ENCODE measurements at regions of chr11 and their contacts with region 1.

Region 1: GRCh38 chr11:121741761-121742361 is 289.1 kb upstream of the SORL1-AS1 start:
- DNase-seq: peak; percentile 26 to 95
- H3K4me3 ChIP-seq: peak overlapping the region; percentile 7 to 21
- H3K27ac ChIP-seq: peak overlapping the region; percentile 83 to 90
- H3K4me1 ChIP-seq: peaks cover 9 to 19% of the 10 kb centered on the region in 2 donors
- H3K27me3 ChIP-seq: no peaks in the 10 kb centered on the region
- CTCF ChIP-seq: no peak

Region 2: DNA sequence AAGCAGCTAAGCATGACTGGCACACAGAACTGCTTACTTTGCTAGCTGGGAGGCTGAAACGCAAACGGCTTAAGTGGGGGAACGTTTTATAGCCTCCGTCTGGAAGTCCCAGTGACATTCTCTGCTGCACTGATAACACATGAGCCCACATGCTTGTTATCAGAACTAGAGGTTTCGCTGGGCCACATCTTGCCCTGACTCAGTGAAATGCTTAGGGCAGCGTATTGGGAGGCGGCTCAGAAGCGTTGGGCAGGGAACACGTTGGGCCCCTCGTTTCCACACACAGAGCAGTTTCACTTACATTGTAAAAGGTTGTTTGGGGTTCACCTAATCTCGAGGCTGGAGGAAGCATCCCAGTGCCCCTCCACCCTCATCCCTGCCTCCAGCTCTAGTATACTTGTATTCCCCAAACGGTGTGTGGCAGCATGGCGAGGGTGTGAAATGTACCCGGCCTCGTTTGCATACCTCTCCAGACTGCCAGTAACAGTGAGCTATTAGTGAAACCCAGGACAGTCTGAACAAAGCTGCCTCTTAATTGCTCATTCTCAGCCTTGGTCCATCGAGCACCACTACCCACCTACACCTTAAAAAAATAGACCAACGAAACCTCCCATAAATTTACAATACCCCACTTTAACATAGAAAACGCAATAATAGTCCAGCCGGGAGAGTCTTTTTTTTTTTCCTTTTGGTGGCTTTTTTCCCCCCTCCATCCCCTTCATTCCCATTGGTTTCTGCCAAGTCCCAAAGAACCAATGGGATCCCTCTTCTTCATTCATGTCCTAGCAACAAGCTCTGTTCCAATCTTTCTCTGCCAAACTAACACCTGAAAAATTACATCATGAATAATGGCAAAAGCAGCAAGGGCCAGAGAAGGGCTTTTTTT is 70.3 kb before region 1 on chr11:
- intact Hi-C with region 1: loop called (anchors 5 kb)
- DNase-seq: no peak
- H3K4me3 ChIP-seq: peak overlapping the region in 1 of 2 donors; percentile 34
- H3K27ac ChIP-seq: peak overlapping the region; percentile 74 to 84
- H3K4me1 ChIP-seq: peaks cover 17 to 22% of the 10 kb centered on the region in 2 donors
- H3K27me3 ChIP-seq: no peaks in the 10 kb centered on the region
- CTCF ChIP-seq: no peak

Region 3: DNA sequence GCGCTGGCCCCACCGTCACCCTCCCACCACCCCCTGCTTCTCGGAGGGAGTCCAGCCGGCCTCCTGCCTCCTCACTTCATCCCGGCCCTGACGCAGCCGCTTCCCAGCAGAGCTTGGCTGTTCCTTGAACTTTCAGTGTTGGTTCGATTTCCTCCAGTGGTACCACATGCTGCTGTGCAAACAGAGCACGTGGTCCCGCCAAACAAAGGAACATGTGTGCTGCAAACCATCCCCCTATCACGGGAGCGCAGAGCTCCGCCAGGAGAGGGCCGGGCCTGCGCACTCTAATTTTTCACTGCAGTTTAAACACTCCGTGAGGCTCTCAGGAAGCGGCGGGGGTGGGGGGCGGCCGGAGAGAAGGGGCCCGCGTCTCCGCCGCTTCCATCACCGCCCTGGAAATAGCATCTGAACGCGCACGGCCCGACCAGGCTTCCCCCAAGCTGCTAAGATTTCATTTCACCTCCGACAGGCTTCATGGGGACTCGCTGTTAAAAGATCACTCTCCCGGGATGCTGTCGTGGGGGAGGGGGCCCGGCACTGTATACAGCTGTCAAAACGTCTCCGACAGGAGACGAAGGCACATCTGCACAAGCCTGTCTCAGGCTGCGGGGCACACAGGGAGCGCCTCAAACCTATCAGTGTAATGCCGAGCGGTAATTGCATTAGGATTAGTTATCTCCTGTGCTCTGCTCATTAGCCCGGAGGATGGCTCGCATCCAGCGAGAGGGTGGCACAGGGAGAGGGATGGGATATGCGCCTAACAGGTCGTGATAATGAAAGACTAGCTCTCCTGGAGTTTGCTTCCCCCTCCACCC is 19.2 kb before region 1 on chr11:
- intact Hi-C with region 1: loop called (anchors 1 kb)
- DNase-seq: peak; percentile 77 to 89
- H3K4me3 ChIP-seq: peak overlapping the region; percentile 64 to 79
- H3K27ac ChIP-seq: peak overlapping the region; percentile 85 to 93
- H3K4me1 ChIP-seq: no peaks in the 10 kb centered on the region
- H3K27me3 ChIP-seq: no peaks in the 10 kb centered on the region
- CTCF ChIP-seq: peak in 2 of 3 experiments; percentile 9 to 14

Region 4: DNA sequence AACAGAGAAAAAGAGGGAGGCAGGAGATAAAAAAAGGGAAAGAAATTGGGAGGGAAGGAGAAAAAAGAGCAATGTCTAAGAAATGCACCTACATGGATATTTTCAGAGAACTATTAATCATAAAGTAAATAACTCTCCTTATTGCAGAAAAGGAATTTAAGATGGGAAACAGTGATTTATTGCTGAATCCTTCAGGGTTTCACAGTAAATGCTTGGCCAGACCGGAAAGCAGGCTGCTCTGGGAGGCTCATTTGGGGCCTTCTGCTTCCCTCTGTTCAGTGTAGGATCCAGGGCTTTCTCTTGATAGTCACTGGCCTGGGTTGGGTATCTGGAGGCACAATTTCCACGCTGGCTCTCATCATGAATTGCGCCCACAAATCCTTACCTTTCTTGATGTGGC is 35.2 kb after region 1 on chr11:
- intact Hi-C with region 1: loop called (anchors 5 kb)
- DNase-seq: no peak
- H3K4me3 ChIP-seq: no peak overlapping the region
- H3K27ac ChIP-seq: peak overlapping the region; percentile 46 to 74
- H3K4me1 ChIP-seq: peaks cover 0 to 25% of the 10 kb centered on the region in 2 donors
- H3K27me3 ChIP-seq: no peaks in the 10 kb centered on the region
- CTCF ChIP-seq: no peak

Measured in ascending aorta (tissue), 2 donors.